Right cardiac atrium (tissue), 5 donors: ENCODE measurements at regions of chr6 and their contacts with region 1.

Region 1: DNA sequence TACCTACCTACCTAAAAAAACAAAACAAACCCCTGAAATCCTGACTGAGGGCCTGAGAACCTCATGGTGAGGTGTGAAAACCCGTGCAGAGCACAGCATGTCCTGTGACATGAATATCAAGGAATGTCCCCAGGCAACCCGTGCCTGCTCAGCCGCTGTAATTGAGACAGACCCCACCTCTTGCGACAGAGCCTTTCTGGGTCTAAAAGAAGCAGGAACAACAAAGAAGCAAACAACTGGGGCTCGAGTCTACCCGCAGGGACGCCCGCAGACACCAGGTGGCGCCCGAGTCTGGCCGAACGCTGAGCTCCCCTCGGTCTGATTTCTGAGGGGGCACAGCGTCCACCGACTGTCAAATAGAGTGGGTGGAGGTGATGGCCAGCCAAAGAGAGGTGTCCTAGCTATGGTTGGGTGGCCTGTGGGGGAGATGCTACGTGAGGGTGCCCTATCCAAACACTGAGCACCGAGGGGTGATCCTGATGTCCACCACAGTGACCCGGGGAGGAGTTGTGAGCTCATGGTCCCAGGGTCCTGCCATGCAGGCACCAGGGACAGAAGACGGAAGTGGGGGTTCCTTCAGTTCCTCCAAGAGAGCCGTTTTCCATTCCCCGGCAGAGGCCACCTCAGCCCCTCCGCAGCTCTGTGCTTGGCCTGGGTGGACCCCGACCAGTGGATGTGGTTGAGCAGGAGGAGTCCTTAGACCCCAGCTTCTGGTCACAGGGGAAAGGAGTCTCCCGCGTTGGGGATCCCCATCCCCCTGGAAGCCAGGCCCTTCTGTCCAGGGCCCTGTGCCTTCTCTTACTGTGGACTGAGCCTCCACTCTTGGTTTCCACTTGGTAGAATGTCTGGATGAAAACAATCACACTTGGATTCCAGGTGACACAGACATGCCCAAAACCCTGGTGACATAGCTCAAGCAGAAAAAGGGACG is 268.2 kb downstream of the CDC5L start:
- DNase-seq: peak; percentile 78 to 90 (median 89)
- ATAC-seq: peak; percentile 75 to 85
- H3K4me3 ChIP-seq: no peak overlapping the region
- H3K27ac ChIP-seq: no peak overlapping the region
- H3K4me1 ChIP-seq: no peaks in the 10 kb centered on the region
- H3K27me3 ChIP-seq: no peaks in the 10 kb centered on the region

Region 2: GRCh38 chr6:45421709-45422502 is 766.2 kb after region 1 on chr6:
- intact Hi-C with region 1: loop called in 1 of 4 experiments (anchors 10 kb)
- DNase-seq: peak; percentile 35 to 80 (median 78)
- ATAC-seq: peak; percentile 68 to 72
- H3K4me3 ChIP-seq: peak overlapping the region; percentile 64
- H3K27ac ChIP-seq: no peak overlapping the region
- H3K4me1 ChIP-seq: no peaks in the 10 kb centered on the region
- H3K27me3 ChIP-seq: no peaks in the 10 kb centered on the region

Region 3: DNA sequence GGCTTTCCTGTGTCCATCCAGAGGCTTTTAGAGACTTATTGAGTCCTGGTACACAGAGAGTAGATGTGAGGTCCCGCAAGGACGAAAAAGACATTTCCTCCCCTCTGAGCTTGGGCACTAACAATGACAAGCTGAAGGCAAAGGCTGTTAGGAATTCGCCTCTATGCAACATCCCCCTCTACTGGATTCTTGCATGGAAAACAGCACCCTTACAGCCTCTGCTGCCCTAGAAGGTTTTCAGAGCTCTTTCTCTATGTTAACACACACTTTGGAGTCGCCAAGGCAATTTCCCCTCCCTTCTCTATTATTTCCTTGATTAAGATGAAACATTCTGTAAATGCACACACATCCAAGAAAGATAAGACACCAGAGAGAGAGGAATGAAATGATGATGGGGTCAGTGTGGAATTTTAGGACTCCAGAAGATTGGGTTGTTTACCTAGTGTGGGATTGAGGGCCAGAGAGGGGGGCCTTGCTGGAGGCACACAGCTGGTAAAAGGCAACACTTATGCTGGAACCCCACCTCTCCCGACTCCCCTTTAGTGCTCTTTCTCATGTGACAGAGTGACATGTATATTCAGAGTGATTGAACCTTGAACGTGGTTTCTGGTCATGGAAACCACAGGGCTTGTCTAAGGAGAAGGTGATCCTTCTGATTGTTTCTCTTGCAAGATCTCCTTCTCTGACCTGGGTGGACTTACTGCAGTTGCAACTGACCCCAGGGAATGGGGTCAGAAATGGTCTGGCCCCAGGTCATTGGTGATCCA is 1059.2 kb after region 1 on chr6:
- intact Hi-C with region 1: loop called in 3 of 4 experiments (anchors 2 to 10 kb)
- DNase-seq: no peak
- ATAC-seq: peak; percentile 93 to 94
- H3K4me3 ChIP-seq: no peak overlapping the region
- H3K27ac ChIP-seq: no peak overlapping the region
- H3K4me1 ChIP-seq: no peaks in the 10 kb centered on the region
- H3K27me3 ChIP-seq: no peaks in the 10 kb centered on the region

Region 4: GRCh38 chr6:45916692-45917091 is 1261.0 kb after region 1 on chr6:
- intact Hi-C with region 1: loop called in 3 of 4 experiments (anchors 5 to 10 kb)
- DNase-seq: no peak
- ATAC-seq: peak; percentile 41 to 53
- H3K4me3 ChIP-seq: no peak overlapping the region
- H3K27ac ChIP-seq: peak overlapping the region; percentile 37
- H3K4me1 ChIP-seq: peaks cover 1% of the 10 kb centered on the region
- H3K27me3 ChIP-seq: no peaks in the 10 kb centered on the region

Region 5: GRCh38 chr6:45922728-45923351 is 1267.2 kb after region 1 on chr6:
- intact Hi-C with region 1: loop called in 3 of 4 experiments (anchors 5 to 10 kb)
- DNase-seq: peak; percentile 63 to 82 (median 75)
- ATAC-seq: peak; percentile 77 to 84
- H3K4me3 ChIP-seq: no peak overlapping the region
- H3K27ac ChIP-seq: no peak overlapping the region
- H3K4me1 ChIP-seq: peaks cover 4% of the 10 kb centered on the region
- H3K27me3 ChIP-seq: no peaks in the 10 kb centered on the region